ENCODE measurements at regions of chr2 and their contacts with region 1.

Region 1: GRCh38 chr2:43226558-43226954 is at the start of gene ZFP36L2:
- DNase-seq: peak; percentile 95
- ATAC-seq: peak; percentile 72
- H3K4me3 Mint-ChIP-seq: peak within 1 kb of the TSS; percentile 94
- H3K27ac Mint-ChIP-seq: peak within 1 kb of the TSS; percentile 95
- H3K4me1 Mint-ChIP-seq: peaks cover 34% of the 10 kb centered on the region
- H3K27me3 Mint-ChIP-seq: no peaks in the 10 kb centered on the region
- CTCF ChIP-seq: no peak
- total RNA-seq, gene ZFP36L2: 102 to 106 TPM

Region 2: DNA sequence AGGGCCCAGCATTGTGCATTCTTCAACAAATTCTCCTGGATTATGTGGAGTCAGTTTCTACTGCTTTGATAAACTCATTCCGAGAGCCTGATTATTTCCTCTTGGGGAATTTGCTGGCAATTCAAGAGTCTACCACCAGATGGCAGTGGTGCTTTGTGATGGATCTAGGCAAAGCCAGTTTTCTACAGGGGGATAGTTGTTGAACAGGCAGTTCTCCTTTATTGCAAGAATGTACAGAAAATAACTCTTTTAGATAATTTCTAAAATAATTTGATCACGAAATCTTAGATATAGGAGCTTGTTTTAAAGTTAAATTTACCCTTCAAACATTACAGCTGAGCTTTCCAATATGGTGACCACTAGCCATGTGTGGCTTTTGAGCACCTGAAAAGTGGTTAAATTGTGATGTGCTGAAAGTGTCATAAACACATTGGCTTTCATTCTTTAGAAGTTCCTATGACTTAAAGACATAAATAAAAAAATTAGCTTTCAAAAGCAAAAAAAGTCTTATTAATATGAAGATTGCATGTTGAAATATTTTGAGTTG is 367.5 kb before region 1 on chr2:
- CTCF ChIA-PET with region 1: interaction called, 19 read pairs
- POLR2A ChIA-PET with region 1: no interaction called
- intact Hi-C with region 1: no loop called
- DNase-seq: peak; percentile 87
- ATAC-seq: peak; percentile 79
- H3K4me3 Mint-ChIP-seq: no peak overlapping the region
- H3K27ac Mint-ChIP-seq: no peak overlapping the region
- H3K4me1 Mint-ChIP-seq: no peaks in the 10 kb centered on the region
- H3K27me3 Mint-ChIP-seq: no peaks in the 10 kb centered on the region
- CTCF ChIP-seq: peak; percentile 99

Region 3: GRCh38 chr2:43024515-43025011 is 202.0 kb before region 1 on chr2:
- CTCF ChIA-PET with region 1: interaction called, 28 read pairs
- POLR2A ChIA-PET with region 1: interaction called, 4 read pairs
- intact Hi-C with region 1: no loop called
- DNase-seq: peak; percentile 68
- ATAC-seq: peak; percentile 67
- H3K4me3 Mint-ChIP-seq: no peak overlapping the region
- H3K27ac Mint-ChIP-seq: no peak overlapping the region
- H3K4me1 Mint-ChIP-seq: peaks cover 27% of the 10 kb centered on the region
- H3K27me3 Mint-ChIP-seq: no peaks in the 10 kb centered on the region
- CTCF ChIP-seq: peak; percentile 68

Region 4: DNA sequence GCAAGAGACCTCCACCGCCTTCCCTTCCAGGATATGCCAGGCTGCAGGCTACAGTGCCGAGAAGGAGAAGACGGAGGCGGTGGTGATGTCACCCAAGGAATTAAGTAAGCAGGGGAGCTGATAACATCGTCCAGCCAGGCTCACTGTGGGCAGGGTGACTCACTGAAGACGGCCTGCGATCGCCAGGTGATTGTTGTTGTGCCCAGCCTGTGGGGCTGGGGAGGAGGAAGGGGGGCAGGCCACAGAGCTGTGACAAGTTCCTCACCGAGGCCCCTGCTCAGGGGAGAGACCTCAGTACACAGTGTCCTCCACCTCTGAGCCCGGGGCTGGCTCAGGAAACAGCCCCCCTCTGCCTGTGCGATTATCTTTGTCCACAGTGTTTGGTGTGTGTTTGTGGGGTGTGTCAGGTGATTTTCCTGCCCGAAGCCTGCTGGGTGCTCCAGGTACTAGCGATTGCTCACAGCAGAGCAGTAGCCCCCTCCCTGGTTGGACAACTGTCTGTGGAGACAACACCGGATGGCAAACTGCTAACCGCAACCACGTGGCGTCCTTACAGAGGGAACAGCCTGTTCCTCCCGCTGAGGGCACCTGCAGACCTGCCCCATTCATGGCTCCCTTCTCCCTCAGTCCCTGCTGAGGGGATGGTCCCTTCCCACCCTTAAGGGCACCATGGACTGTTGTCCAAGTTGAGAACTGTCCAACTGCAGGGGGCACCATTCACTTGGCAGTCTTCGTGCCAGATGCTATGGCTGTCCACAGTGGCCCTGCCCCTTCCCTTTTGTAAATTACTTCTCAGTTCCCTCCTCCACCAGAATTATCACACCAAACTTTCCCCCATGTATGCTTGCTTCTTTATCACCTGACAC is 95.3 kb before region 1 on chr2:
- CTCF ChIA-PET with region 1: interaction called, 647 read pairs
- POLR2A ChIA-PET with region 1: interaction called, 549 read pairs
- intact Hi-C with region 1: loop called (anchors 1 kb)
- DNase-seq: peak; percentile 95
- ATAC-seq: peak; percentile 50
- H3K4me3 Mint-ChIP-seq: peak overlapping the region; percentile 39
- H3K27ac Mint-ChIP-seq: peak overlapping the region; percentile 95
- H3K4me1 Mint-ChIP-seq: peaks cover 85% of the 10 kb centered on the region
- H3K27me3 Mint-ChIP-seq: no peaks in the 10 kb centered on the region
- CTCF ChIP-seq: peak; percentile 70

Region 5: GRCh38 chr2:43194121-43194869 is 32.3 kb before region 1 on chr2:
- CTCF ChIA-PET with region 1: interaction called, 19 read pairs
- POLR2A ChIA-PET with region 1: interaction called, 24 read pairs
- intact Hi-C with region 1: no loop called
- DNase-seq: no peak
- ATAC-seq: no peak
- H3K4me3 Mint-ChIP-seq: peak overlapping the region; percentile 67
- H3K27ac Mint-ChIP-seq: peak overlapping the region; percentile 87
- H3K4me1 Mint-ChIP-seq: peaks cover 56% of the 10 kb centered on the region
- H3K27me3 Mint-ChIP-seq: no peaks in the 10 kb centered on the region
- CTCF ChIP-seq: no peak

Region 6: GRCh38 chr2:43542285-43542937 is 315.9 kb after region 1 on chr2:
- CTCF ChIA-PET with region 1: interaction called, 17 read pairs
- POLR2A ChIA-PET with region 1: interaction called, 3 read pairs
- intact Hi-C with region 1: no loop called
- DNase-seq: no peak
- ATAC-seq: peak; percentile 45
- H3K4me3 Mint-ChIP-seq: no peak overlapping the region
- H3K27ac Mint-ChIP-seq: no peak overlapping the region
- H3K4me1 Mint-ChIP-seq: peaks cover 7% of the 10 kb centered on the region
- H3K27me3 Mint-ChIP-seq: no peaks in the 10 kb centered on the region
- CTCF ChIP-seq: peak; percentile 74